ENCODE measurements at regions of chr15 and their contacts with region 1.

Region 1: GRCh38 chr15:58472821-58473581 is 41.2 kb downstream of the LIPC start:
- DNase-seq: peak; percentile 59
- H3K4me3 ChIP-seq: no peak overlapping the region
- H3K27ac ChIP-seq: peak overlapping the region; percentile 37
- H3K4me1 ChIP-seq: peaks cover 30% of the 10 kb centered on the region
- H3K27me3 ChIP-seq: no peaks in the 10 kb centered on the region
- CTCF ChIP-seq: no peak
- POLR2A ChIP-seq: peak; percentile 23

Region 2: DNA sequence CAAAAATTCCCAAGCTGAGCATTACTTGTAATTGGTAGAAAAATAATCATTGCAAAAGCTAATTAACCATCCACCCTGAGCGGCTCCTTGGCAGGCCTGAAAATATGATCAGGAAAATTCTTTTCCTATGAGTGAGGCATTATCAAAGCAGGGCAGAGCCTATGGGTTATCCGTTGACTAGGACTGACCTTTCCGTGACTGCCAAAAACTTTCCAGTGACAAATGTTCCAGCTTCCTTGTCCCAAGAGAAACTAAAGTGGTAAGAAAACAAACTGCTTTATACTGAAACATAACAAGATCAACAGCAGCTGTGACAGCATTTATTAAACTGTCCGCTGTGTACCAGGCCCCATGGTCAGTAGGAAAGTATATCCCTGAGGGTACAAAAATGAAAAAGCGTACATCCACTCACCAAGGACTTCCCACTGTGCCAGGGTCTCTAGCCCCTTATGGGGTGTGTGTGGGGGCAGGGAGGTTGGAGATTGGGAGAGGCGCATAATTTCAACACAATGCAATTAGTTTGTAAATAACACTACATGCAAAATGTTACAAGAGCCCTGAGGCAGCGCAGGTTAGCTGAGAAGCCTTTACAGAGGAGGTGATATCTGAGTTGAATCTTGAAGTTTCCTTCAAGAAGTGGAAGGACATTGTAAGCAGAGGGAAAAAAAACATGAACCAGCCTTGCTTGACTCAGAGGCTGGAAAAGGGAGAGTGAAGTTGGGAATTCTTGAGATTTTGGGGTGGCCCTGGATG is 32.7 kb before region 1 on chr15:
- CTCF ChIA-PET with region 1: interaction called, 3 read pairs
- POLR2A ChIA-PET with region 1: no interaction called
- dilution Hi-C with region 1: no loop called
- intact Hi-C with region 1: loop called (anchors 2 kb)
- DNase-seq: peak; percentile 90
- H3K4me3 ChIP-seq: no peak overlapping the region
- H3K27ac ChIP-seq: peak overlapping the region; percentile 82
- H3K4me1 ChIP-seq: peaks cover 32% of the 10 kb centered on the region
- H3K27me3 ChIP-seq: no peaks in the 10 kb centered on the region
- CTCF ChIP-seq: no peak
- POLR2A ChIP-seq: peak; percentile 34

Region 3: GRCh38 chr15:58457381-58457965 is 15.5 kb before region 1 on chr15:
- CTCF ChIA-PET with region 1: interaction called, 4 read pairs
- POLR2A ChIA-PET with region 1: interaction called, 4 read pairs
- dilution Hi-C with region 1: no loop called
- intact Hi-C with region 1: loop called (anchors 1 kb)
- DNase-seq: no peak
- H3K4me3 ChIP-seq: no peak overlapping the region
- H3K27ac ChIP-seq: peak overlapping the region; percentile 46
- H3K4me1 ChIP-seq: peaks cover 28% of the 10 kb centered on the region
- H3K27me3 ChIP-seq: no peaks in the 10 kb centered on the region
- CTCF ChIP-seq: no peak
- POLR2A ChIP-seq: no peak

Region 4: GRCh38 chr15:58521293-58521991 is 48.4 kb after region 1 on chr15:
- CTCF ChIA-PET with region 1: interaction called, 9 read pairs
- POLR2A ChIA-PET with region 1: no interaction called
- dilution Hi-C with region 1: no loop called
- intact Hi-C with region 1: loop called (anchors 1 kb)
- DNase-seq: peak; percentile 88
- H3K4me3 ChIP-seq: no peak overlapping the region
- H3K27ac ChIP-seq: peak overlapping the region; percentile 72
- H3K4me1 ChIP-seq: peaks cover 27% of the 10 kb centered on the region
- H3K27me3 ChIP-seq: no peaks in the 10 kb centered on the region
- CTCF ChIP-seq: no peak
- POLR2A ChIP-seq: no peak

Region 5: GRCh38 chr15:58546635-58547627 is 73.9 kb after region 1 on chr15:
- CTCF ChIA-PET with region 1: interaction called, 5 read pairs
- POLR2A ChIA-PET with region 1: interaction called, 7 read pairs
- dilution Hi-C with region 1: no loop called
- intact Hi-C with region 1: loop called (anchors 2 kb)
- DNase-seq: peak; percentile 77
- H3K4me3 ChIP-seq: no peak overlapping the region
- H3K27ac ChIP-seq: peak overlapping the region; percentile 58
- H3K4me1 ChIP-seq: peaks cover 27% of the 10 kb centered on the region
- H3K27me3 ChIP-seq: no peaks in the 10 kb centered on the region
- CTCF ChIP-seq: no peak
- POLR2A ChIP-seq: no peak